ENCODE measurements at regions of chr16 and their contacts with region 1.

Region 1: DNA sequence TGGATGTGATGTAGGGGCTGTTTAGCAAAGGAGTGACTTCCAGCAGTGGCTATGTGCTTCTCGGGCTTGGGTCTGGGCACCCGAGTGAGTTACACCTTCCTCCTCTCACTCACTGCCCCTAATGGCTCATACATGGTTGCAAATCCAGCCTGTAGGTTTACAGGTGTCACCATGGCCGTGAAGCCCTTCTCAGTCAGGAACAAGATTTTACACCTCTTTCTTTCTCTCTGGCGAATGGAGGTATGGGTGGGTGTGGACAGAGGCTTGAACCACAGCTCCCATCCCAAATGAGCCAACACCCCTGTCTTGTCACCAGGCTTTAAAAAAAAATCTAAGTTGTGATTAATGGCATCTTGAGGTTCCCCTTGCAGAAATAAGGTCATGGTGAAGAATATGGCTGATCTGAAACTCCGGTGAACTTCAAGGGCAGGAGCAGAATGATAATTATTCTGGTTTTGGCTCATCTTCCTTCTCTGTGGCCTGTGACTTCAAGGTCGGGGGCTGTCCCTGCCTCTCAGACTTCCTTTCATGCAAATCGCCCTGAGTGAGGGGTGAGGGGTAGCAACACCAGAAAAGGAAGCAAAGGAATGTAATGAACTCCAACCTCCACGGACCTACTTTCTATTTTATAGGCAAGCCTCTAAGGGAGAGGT is 331.2 kb downstream of the MAF start:
- DNase-seq: no peak
- ATAC-seq: peak; percentile 92
- H3K4me3 Mint-ChIP-seq: peak overlapping the region; percentile 30
- H3K27ac Mint-ChIP-seq: peak overlapping the region; percentile 51
- H3K4me1 Mint-ChIP-seq: peaks cover 33% of the 10 kb centered on the region
- H3K27me3 Mint-ChIP-seq: peaks cover 26% of the 10 kb centered on the region
- CTCF ChIP-seq: no peak

Region 2: GRCh38 chr16:79093554-79093967 is 175.8 kb before region 1 on chr16:
- CTCF ChIA-PET with region 1: no interaction called
- POLR2A ChIA-PET with region 1: no interaction called
- intact Hi-C with region 1: no loop called
- DNase-seq: no peak
- ATAC-seq: peak; percentile 66
- H3K4me3 Mint-ChIP-seq: peak overlapping the region; percentile 53
- H3K27ac Mint-ChIP-seq: no peak overlapping the region
- H3K4me1 Mint-ChIP-seq: peaks cover 48% of the 10 kb centered on the region
- H3K27me3 Mint-ChIP-seq: peaks cover 15% of the 10 kb centered on the region
- CTCF ChIP-seq: no peak

Region 3: GRCh38 chr16:79177018-79177417 is 92.3 kb before region 1 on chr16:
- CTCF ChIA-PET with region 1: no interaction called
- POLR2A ChIA-PET with region 1: no interaction called
- intact Hi-C with region 1: loop called (anchors 5 kb)
- DNase-seq: no peak
- ATAC-seq: peak; percentile 57
- H3K4me3 Mint-ChIP-seq: no peak overlapping the region
- H3K27ac Mint-ChIP-seq: no peak overlapping the region
- H3K4me1 Mint-ChIP-seq: peaks cover 12% of the 10 kb centered on the region
- H3K27me3 Mint-ChIP-seq: peaks cover 14% of the 10 kb centered on the region
- CTCF ChIP-seq: no peak

Region 4: DNA sequence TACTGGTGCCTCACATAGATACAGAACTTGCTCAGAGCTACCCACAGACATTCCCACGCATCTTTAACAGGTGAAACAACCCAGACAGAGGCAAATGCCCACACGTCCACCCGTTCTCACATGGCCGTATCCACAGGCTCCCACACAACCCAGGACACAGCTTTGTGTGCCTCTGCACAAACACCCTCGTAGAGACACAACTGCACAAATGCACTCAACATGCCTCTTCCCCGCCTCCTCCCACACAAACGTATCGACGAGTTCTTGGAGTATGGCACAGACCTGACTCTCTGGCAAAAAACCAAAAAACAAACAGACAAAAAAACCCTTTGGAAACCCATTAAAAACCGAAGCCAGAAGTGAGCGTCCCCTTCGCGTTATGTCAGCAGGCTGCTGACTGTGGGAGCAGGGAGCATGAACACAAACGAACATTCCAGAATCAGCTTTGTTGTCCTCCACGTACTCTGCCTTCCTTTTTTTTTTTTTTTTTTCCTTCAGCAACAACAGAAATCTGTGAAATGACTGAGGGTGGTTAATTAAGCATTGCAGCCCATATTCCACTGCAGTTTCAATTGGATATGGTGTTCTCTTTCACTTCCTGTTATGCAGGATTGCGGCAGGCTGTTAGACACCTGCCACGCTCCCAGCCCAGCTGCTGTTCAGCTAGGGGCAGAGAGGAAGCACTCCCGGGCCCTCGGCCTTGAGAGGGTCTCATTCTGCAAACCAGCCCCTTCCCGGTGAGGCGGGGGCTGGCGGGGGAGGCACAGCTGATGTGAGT is 17.5 kb after region 1 on chr16:
- CTCF ChIA-PET with region 1: interaction called, 3 read pairs
- POLR2A ChIA-PET with region 1: interaction called, 9 read pairs
- intact Hi-C with region 1: loop called (anchors 1 kb)
- DNase-seq: peak; percentile 37
- ATAC-seq: peak; percentile 88
- H3K4me3 Mint-ChIP-seq: peak overlapping the region; percentile 29
- H3K27ac Mint-ChIP-seq: no peak overlapping the region
- H3K4me1 Mint-ChIP-seq: peaks cover 28% of the 10 kb centered on the region
- H3K27me3 Mint-ChIP-seq: peaks cover 53% of the 10 kb centered on the region
- CTCF ChIP-seq: no peak

Measured in activated B cell treated with CpG ODN at 0.5 μM for 24 hours (primary cell).